Aorta (tissue), 5 donors: ENCODE measurements at regions of chr3 and their contacts with region 1.

Region 1: GRCh38 chr3:25843332-25843731 is 53.4 kb downstream of the OXSM start:
- DNase-seq: no peak
- ATAC-seq: no peak
- H3K4me3 ChIP-seq: no peak overlapping the region
- H3K27ac ChIP-seq: no peak overlapping the region
- H3K4me1 ChIP-seq: no peaks in the 10 kb centered on the region
- H3K27me3 ChIP-seq: no peaks in the 10 kb centered on the region

Region 2: GRCh38 chr3:25088284-25088683 is 755.0 kb before region 1 on chr3:
- intact Hi-C with region 1: no loop called
- DNase-seq: no peak
- ATAC-seq: no peak
- H3K4me3 ChIP-seq: no peak overlapping the region
- H3K27ac ChIP-seq: no peak overlapping the region
- H3K4me1 ChIP-seq: no peaks in the 10 kb centered on the region
- H3K27me3 ChIP-seq: no peaks in the 10 kb centered on the region

Region 3: DNA sequence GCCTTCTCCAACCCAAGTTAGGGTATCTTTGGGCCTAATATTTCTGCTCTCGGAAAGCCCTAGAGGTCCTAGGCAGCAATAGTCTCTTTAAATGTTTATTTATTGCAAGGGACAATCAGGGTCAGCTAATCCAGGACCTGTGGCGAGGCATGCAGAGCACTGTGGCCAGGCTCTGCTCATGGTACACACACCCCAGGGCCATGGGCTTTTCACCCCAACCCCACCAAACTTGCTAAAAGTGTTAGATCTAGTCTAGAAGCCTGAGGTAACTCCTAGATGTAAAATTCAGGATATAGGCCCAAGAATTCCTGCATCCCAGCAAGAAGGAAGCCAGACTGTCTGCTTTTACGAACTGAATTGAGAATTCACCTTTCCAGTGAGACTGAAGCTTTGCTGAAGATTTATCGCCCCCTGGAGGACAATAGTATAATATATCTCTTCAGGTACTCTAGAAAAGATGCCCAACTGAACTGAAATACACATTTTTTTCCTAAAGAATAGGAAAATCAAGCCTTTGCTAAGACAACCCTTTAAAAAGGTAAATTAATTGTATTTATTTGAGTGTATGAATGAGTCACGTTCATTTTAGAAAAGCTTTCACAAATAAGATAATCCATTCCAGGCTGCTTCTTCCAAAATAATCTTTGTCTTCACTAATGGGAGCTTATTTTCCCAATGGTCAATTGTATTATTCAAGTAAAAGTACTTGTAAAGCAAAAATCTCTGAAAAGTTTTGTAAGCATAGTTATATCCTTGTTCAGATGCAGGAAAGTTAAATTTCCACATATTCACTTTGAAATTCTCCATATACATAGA is 869.1 kb after region 1 on chr3:
- intact Hi-C with region 1: loop called (anchors 2 to 5 kb)
- DNase-seq: no peak
- ATAC-seq: no peak
- H3K4me3 ChIP-seq: no peak overlapping the region
- H3K27ac ChIP-seq: no peak overlapping the region
- H3K4me1 ChIP-seq: no peaks in the 10 kb centered on the region
- H3K27me3 ChIP-seq: no peaks in the 10 kb centered on the region